ENCODE measurements at regions of chr9 and their contacts with region 1.

Region 1: GRCh38 chr9:127479507-127480081 is 28.3 kb downstream of the LRSAM1 start:
- DNase-seq: no peak
- H3K4me3 ChIP-seq: no peak overlapping the region
- H3K27ac ChIP-seq: no peak overlapping the region
- H3K4me1 ChIP-seq: no peaks in the 10 kb centered on the region
- H3K27me3 ChIP-seq: no peaks in the 10 kb centered on the region
- CTCF ChIP-seq: no peak
- EP300 ChIP-seq: no peak
- POLR2A ChIP-seq: no peak

Region 2: GRCh38 chr9:127178686-127179632 is 300.6 kb before region 1 on chr9:
- in situ Hi-C with region 1: no loop called
- intact Hi-C with region 1: no loop called
- DNase-seq: peak; percentile 7
- H3K4me3 ChIP-seq: no peak overlapping the region
- H3K27ac ChIP-seq: peak overlapping the region in 2 of 4 donors; percentile 8 to 41
- H3K4me1 ChIP-seq: peaks cover 0 to 10% (median 3%) of the 10 kb centered on the region in 4 donors
- H3K27me3 ChIP-seq: no peaks in the 10 kb centered on the region
- CTCF ChIP-seq: no peak
- EP300 ChIP-seq: no peak
- POLR2A ChIP-seq: no peak

Region 3: GRCh38 chr9:127396808-127397497 is 82.6 kb before region 1 on chr9 and contains the start of gene SLC2A8:
- in situ Hi-C with region 1: no loop called
- intact Hi-C with region 1: no loop called
- DNase-seq: peak; percentile 99
- H3K4me3 ChIP-seq: peak within 1 kb of the TSS; percentile 57 to 98 (median 82)
- H3K27ac ChIP-seq: peak within 1 kb of the TSS; percentile 89 to 96 (median 95)
- H3K4me1 ChIP-seq: peaks cover 7 to 22% (median 12%) of the 10 kb centered on the region in 4 donors
- H3K27me3 ChIP-seq: no peaks in the 10 kb centered on the region
- CTCF ChIP-seq: peak in 4 of 5 experiments; percentile 8 to 70 (median 32)
- EP300 ChIP-seq: no peak
- POLR2A ChIP-seq: peak; percentile 88
- total RNA-seq, gene SLC2A8: 9.6 to 95.8 (median 29.4) TPM

Region 4: GRCh38 chr9:128643519-128644300 is 1164.1 kb after region 1 on chr9:
- in situ Hi-C with region 1: no loop called
- intact Hi-C with region 1: loop called (anchors 5 kb)
- DNase-seq: no peak
- H3K4me3 ChIP-seq: no peak overlapping the region
- H3K27ac ChIP-seq: no peak overlapping the region
- H3K4me1 ChIP-seq: no peaks in the 10 kb centered on the region
- H3K27me3 ChIP-seq: no peaks in the 10 kb centered on the region
- CTCF ChIP-seq: no peak
- EP300 ChIP-seq: no peak
- POLR2A ChIP-seq: no peak